ENCODE measurements at regions of chr7 and their contacts with region 1.

Region 1: DNA sequence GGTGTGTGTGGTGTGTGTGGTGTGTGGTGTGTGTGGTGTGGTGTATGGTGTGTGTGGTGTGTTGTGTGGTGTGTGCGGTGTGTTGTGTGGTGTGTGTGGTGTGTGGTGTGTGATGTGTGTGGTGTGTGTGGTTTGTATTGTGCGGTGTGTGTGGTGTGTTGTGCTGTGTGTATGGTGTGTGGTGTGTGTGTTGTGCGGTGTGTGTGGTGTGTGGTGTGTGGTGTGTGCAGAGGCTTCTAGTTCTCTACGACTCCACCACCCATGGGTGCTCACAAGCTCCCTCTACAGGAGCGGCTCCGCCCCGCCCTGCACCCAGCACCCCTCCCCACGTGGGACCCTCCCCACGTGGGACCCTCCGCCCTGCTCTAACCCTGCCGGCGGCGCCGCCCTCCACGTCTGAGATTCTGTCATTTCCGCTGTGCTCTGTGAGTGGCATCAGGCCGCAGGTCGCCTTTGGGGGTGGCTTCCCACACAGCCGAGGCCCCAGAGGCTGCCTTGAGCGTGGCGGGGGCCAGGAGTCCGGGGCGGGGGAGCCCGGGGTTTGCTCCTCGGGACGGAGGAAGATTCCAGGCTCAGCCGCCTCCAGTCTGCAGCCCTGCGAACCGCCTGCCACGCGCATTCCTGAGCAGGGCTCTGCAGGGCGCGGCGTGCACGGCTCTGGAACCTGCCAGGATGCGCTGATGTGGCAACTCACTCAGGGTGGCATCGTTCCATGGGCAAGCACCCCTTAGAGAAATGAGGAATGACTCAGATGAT is 37.0 kb upstream of the DNAJB6 start:
- H3K4me3 Mint-ChIP-seq: peak overlapping the region; percentile 46
- H3K27ac Mint-ChIP-seq: peak overlapping the region; percentile 97
- H3K4me1 Mint-ChIP-seq: peaks cover 82% of the 10 kb centered on the region
- H3K27me3 Mint-ChIP-seq: peaks cover 4% of the 10 kb centered on the region

Region 2: GRCh38 chr7:157193274-157193673 is 106.5 kb before region 1 on chr7:
- intact Hi-C with region 1: no loop called
- H3K4me3 Mint-ChIP-seq: no peak overlapping the region
- H3K27ac Mint-ChIP-seq: no peak overlapping the region
- H3K4me1 Mint-ChIP-seq: no peaks in the 10 kb centered on the region
- H3K27me3 Mint-ChIP-seq: no peaks in the 10 kb centered on the region

Region 3: GRCh38 chr7:157219154-157219553 is 80.6 kb before region 1 on chr7:
- intact Hi-C with region 1: no loop called
- H3K4me3 Mint-ChIP-seq: no peak overlapping the region
- H3K27ac Mint-ChIP-seq: no peak overlapping the region
- H3K4me1 Mint-ChIP-seq: peaks cover 10% of the 10 kb centered on the region
- H3K27me3 Mint-ChIP-seq: no peaks in the 10 kb centered on the region

Region 4: DNA sequence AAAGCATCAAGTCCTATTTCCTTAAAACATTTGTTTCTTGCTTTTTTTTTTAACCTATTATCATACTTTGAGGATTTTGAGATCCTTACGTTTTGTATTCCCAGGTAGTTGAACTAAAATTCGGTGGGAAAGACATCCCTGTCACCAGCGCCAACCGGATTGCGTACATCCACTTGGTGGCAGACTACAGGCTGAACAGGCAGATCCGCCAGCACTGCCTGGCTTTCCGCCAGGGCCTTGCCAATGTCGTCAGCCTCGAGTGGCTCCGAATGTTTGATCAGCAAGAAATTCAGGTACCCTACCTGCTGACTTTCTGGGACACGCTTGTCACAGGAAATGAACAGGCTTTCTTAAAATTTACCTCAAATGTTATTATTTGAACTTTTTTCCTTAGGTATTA is 45.9 kb before region 1 on chr7:
- intact Hi-C with region 1: no loop called
- H3K4me3 Mint-ChIP-seq: no peak overlapping the region
- H3K27ac Mint-ChIP-seq: no peak overlapping the region
- H3K4me1 Mint-ChIP-seq: no peaks in the 10 kb centered on the region
- H3K27me3 Mint-ChIP-seq: no peaks in the 10 kb centered on the region

Region 5: GRCh38 chr7:157273208-157274093 is 26.3 kb before region 1 on chr7:
- intact Hi-C with region 1: loop called (anchors 1 kb)
- H3K4me3 Mint-ChIP-seq: peak overlapping the region; percentile 17
- H3K27ac Mint-ChIP-seq: peak overlapping the region; percentile 84
- H3K4me1 Mint-ChIP-seq: peaks cover 73% of the 10 kb centered on the region
- H3K27me3 Mint-ChIP-seq: peaks cover 1% of the 10 kb centered on the region

Region 6: GRCh38 chr7:157318012-157318709 is 18.4 kb after region 1 on chr7:
- intact Hi-C with region 1: loop called (anchors 1 kb)
- H3K4me3 Mint-ChIP-seq: peak overlapping the region; percentile 44
- H3K27ac Mint-ChIP-seq: peak overlapping the region; percentile 93
- H3K4me1 Mint-ChIP-seq: peaks cover 38% of the 10 kb centered on the region
- H3K27me3 Mint-ChIP-seq: no peaks in the 10 kb centered on the region

Region 7: DNA sequence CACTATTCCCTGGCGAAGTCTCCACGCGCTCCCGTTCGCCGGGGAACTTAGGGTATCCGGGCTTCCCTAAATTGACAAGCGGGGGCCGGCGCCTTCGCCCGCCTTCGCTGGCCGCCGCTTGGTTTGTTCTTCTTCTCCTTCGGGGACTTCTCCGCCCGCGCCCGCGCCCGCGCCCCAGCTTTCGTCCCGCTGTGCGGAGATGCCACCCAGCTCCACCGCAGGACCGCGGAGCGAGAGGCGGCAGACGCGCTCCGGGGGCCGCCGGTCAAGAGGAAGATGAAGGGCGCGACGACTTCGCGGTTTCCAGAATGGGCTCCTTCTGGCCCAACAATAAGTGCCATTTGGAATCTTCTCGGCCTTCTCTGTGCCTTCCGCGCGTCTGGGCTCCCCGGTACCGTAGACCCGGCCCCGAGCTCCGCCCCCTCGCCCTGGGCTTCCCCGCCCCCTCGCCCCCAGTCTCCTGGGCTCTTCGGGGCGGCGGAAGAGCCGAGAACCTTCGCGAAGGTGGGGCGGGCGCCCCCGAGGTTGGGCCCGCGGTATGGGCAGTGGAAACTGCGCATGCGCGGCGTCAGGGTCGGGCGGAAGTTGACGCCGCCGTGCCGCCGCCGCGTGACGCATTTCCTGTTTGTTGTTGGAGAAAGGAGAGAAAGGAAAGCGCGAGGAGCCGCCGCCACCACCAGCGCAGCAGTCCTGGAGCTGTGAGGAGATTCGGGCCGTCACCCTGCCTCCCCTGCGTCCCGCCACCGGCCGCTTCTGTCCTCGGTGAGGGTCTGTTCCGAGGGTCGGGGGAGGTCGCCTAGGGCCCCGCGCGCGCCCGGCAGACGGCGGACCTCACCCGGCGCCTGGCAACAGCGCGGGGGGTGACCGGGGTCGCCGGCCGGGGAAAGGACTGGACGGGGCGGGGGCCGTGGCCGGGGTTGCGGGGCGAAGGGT is 36.9 kb after region 1 on chr7 and contains the start of gene DNAJB6:
- intact Hi-C with region 1: loop called (anchors 1 kb)
- H3K4me3 Mint-ChIP-seq: peak within 1 kb of the TSS; percentile 78
- H3K27ac Mint-ChIP-seq: peak within 1 kb of the TSS; percentile 97
- H3K4me1 Mint-ChIP-seq: peaks cover 45% of the 10 kb centered on the region
- H3K27me3 Mint-ChIP-seq: no peaks in the 10 kb centered on the region

Region 8: DNA sequence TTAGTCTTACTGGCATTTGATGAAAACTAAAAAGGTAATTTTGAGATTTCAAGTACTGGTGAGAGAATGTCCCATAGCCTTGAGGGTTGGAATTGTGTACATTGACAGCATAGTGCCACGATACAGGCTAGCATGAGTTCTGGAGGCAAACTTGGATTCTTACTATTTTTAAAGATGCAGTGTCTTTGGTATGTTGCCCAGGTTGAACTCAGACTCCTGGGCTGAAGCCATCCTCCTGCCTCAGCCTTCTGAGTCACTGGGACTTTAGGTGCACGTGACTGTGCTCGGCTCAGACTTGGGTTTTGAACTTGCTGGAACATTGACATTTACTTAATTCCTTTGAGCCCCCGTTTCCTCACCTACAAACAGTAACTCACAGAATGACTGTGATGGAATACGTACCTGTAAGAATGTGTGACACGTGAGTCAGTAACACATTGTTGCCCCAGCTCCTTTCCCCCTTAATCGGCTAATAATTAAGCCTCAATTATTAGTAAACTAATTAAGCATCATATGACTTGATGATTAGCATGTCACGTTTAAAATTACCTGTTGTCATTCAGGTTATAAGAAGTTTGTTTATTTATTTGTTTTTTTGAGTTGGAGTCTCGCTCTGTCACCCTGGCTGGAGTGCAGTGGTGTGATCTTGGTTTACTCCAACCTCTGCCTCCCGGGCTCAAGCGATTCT is 47.6 kb after region 1 on chr7:
- intact Hi-C with region 1: no loop called
- H3K4me3 Mint-ChIP-seq: no peak overlapping the region
- H3K27ac Mint-ChIP-seq: no peak overlapping the region
- H3K4me1 Mint-ChIP-seq: peaks cover 82% of the 10 kb centered on the region
- H3K27me3 Mint-ChIP-seq: no peaks in the 10 kb centered on the region

Measured in dendritic cell treated with granulocyte-macrophage colony-stimulating factor and Interleukin-4, amounts not matched to agents 40 ng/mL and 50 ng/mL, for 4 days (primary cell).